Psoas muscle (tissue), 8 donors: ENCODE measurements at regions of chrX and their contacts with region 1.

Region 1: DNA sequence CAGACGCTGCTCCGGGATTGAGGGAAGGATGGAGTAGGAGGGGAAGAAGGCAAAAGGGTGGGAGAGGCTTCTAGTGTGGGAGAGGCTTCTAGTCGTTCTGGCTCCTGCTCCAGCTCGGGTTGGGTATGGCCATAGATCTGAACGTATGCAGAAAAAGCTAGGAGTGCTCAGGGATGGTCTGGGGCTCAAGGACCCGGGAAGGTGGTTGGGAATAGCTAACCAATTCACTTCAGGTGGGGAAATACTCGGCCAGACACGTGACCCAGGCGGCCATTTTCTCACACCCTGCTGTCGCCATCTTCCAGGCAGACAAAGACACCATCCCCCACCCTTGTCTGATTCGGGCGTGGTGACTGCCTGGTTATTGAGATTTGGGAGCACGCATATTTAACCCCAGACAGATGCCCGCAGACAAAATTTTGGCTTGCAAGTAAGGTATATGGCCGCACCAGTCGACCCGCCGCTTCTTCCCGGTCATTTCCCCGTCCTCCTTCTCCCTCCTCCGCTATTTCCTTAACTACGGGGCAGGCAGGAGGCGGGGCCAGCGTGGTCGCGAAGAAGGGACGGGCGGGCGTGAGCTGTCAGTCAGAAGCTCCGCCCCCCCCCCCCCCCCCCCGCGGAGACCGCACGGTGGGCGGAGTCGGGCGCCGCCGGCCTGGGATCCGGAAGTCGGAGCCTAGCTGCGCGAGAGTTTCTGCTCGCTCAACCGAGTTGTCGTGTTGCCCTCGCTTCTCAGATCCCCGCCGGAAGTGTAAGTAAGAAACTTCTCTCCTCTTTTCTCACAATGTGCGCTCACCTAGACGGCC is at the start of gene GNL3L:
- DNase-seq: peak; percentile 83 to 94
- ATAC-seq: peak; percentile 94 to 96 (median 94)
- H3K4me3 ChIP-seq: peak within 1 kb of the TSS; percentile 81
- H3K27ac ChIP-seq: peak within 1 kb of the TSS; percentile 84
- H3K4me1 ChIP-seq: no peaks in the 10 kb centered on the region
- H3K27me3 ChIP-seq: peaks cover 0 to 7% (median 0%) of the 10 kb centered on the region in 3 donors
- CTCF ChIP-seq: no peak
- total RNA-seq, gene GNL3L: 30.7 to 36.1 (median 33.3) TPM

Region 2: GRCh38 chrX:54439967-54440871 is 89.5 kb before region 1 on chrX and contains the start of gene TSR2:
- intact Hi-C with region 1: loop called in 1 of 2 experiments (anchors 5 kb)
- DNase-seq: peak; percentile 83 to 86
- ATAC-seq: peak; percentile 98 to 100 (median 99)
- H3K4me3 ChIP-seq: peak within 1 kb of the TSS; percentile 82
- H3K27ac ChIP-seq: peak within 1 kb of the TSS; percentile 56
- H3K4me1 ChIP-seq: peaks cover 6% of the 10 kb centered on the region
- H3K27me3 ChIP-seq: peaks cover 0 to 1% (median 0%) of the 10 kb centered on the region in 3 donors
- CTCF ChIP-seq: no peak
- total RNA-seq, gene TSR2: 21.9 to 32.7 (median 30.3) TPM

Region 3: GRCh38 chrX:54659547-54659946 is 129.8 kb after region 1 on chrX:
- intact Hi-C with region 1: no loop called
- DNase-seq: no peak
- ATAC-seq: no peak
- H3K4me3 ChIP-seq: no peak overlapping the region
- H3K27ac ChIP-seq: no peak overlapping the region
- H3K4me1 ChIP-seq: no peaks in the 10 kb centered on the region
- H3K27me3 ChIP-seq: no peaks in the 10 kb centered on the region
- CTCF ChIP-seq: no peak

Region 4: GRCh38 chrX:55142206-55142918 is 612.6 kb after region 1 on chrX:
- intact Hi-C with region 1: no loop called
- DNase-seq: no peak
- ATAC-seq: no peak
- H3K4me3 ChIP-seq: no peak overlapping the region
- H3K27ac ChIP-seq: no peak overlapping the region
- H3K4me1 ChIP-seq: no peaks in the 10 kb centered on the region
- H3K27me3 ChIP-seq: peaks cover 0 to 5% (median 0%) of the 10 kb centered on the region in 3 donors
- CTCF ChIP-seq: no peak